CD8-positive, alpha-beta memory T cell (primary cell): ENCODE measurements at regions of chr10 and their contacts with region 1.

Region 1: GRCh38 chr10:62637249-62638061 is 167.1 kb upstream of the ADO start:
- DNase-seq: peak; percentile 39 to 78 (median 76)
- H3K4me3 ChIP-seq: peak overlapping the region; percentile 55
- H3K4me3 Mint-ChIP-seq: no peak overlapping the region
- H3K27ac ChIP-seq: peak overlapping the region; percentile 70
- H3K27ac Mint-ChIP-seq: no peak overlapping the region
- H3K4me1 ChIP-seq: peaks cover 32% of the 10 kb centered on the region
- H3K4me1 Mint-ChIP-seq: peaks cover 8 to 24% (median 10%) of the 10 kb centered on the region in 3 donors
- H3K27me3 ChIP-seq: no peaks in the 10 kb centered on the region
- H3K27me3 Mint-ChIP-seq: no peaks in the 10 kb centered on the region

Region 2: DNA sequence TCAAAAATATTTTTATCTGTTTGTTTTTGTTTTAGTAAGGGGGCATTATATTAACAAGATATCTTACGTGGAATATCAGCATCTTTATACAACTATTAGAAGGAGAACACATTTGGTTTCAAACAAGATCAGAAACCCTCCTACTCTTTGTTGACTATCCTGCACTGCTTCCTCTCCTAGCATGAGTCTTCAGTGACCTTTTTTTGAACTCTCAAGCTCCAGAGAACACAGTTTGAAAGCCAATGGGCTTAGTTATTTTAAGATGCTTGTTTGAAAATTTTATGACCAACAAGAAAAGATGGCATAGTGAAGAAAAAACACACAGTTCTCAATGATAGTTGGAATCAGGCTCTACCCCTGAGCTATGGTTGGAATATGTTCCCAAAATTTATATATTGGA is 331.6 kb before region 1 on chr10:
- CTCF ChIA-PET with region 1: no interaction called
- POLR2A ChIA-PET with region 1: interaction called, 23 read pairs
- DNase-seq: no peak
- H3K4me3 ChIP-seq: no peak overlapping the region
- H3K4me3 Mint-ChIP-seq: no peak overlapping the region
- H3K27ac ChIP-seq: no peak overlapping the region
- H3K27ac Mint-ChIP-seq: peak overlapping the region in 1 of 8 donors; percentile 46
- H3K4me1 ChIP-seq: peaks cover 17% of the 10 kb centered on the region
- H3K4me1 Mint-ChIP-seq: peaks cover 7 to 27% (median 9%) of the 10 kb centered on the region in 3 donors
- H3K27me3 ChIP-seq: no peaks in the 10 kb centered on the region
- H3K27me3 Mint-ChIP-seq: peaks cover 7 to 24% of the 10 kb centered on the region in 2 donors

Region 3: GRCh38 chr10:62661143-62661542 is 23.7 kb after region 1 on chr10:
- CTCF ChIA-PET with region 1: no interaction called
- POLR2A ChIA-PET with region 1: no interaction called
- DNase-seq: no peak
- H3K4me3 ChIP-seq: no peak overlapping the region
- H3K4me3 Mint-ChIP-seq: no peak overlapping the region
- H3K27ac ChIP-seq: no peak overlapping the region
- H3K27ac Mint-ChIP-seq: peak overlapping the region in 1 of 8 donors; percentile 2
- H3K4me1 ChIP-seq: no peaks in the 10 kb centered on the region
- H3K4me1 Mint-ChIP-seq: peaks cover 6 to 12% (median 9%) of the 10 kb centered on the region in 3 donors
- H3K27me3 ChIP-seq: no peaks in the 10 kb centered on the region
- H3K27me3 Mint-ChIP-seq: peaks cover 0 to 2% of the 10 kb centered on the region in 2 donors

Region 4: GRCh38 chr10:62681211-62681940 is 43.9 kb after region 1 on chr10:
- CTCF ChIA-PET with region 1: interaction called, 11 read pairs
- POLR2A ChIA-PET with region 1: no interaction called
- DNase-seq: peak; percentile 39 to 86 (median 64)
- H3K4me3 ChIP-seq: no peak overlapping the region
- H3K4me3 Mint-ChIP-seq: peak overlapping the region in 6 of 7 donors; percentile 2 to 76 (median 44)
- H3K27ac ChIP-seq: no peak overlapping the region
- H3K27ac Mint-ChIP-seq: peak overlapping the region in 7 of 8 donors; percentile 27 to 92 (median 84)
- H3K4me1 ChIP-seq: peaks cover 16% of the 10 kb centered on the region
- H3K4me1 Mint-ChIP-seq: peaks cover 20 to 40% (median 30%) of the 10 kb centered on the region in 3 donors
- H3K27me3 ChIP-seq: no peaks in the 10 kb centered on the region
- H3K27me3 Mint-ChIP-seq: no peaks in the 10 kb centered on the region

Region 5: GRCh38 chr10:62804356-62805230 is 167.1 kb after region 1 on chr10 and contains the start of gene ADO:
- CTCF ChIA-PET with region 1: interaction called, 12 read pairs
- POLR2A ChIA-PET with region 1: interaction called, 5 read pairs
- DNase-seq: peak; percentile 66 to 84 (median 79)
- H3K4me3 ChIP-seq: peak within 1 kb of the TSS; percentile 84
- H3K4me3 Mint-ChIP-seq: peak within 1 kb of the TSS; percentile 89 to 97 (median 97)
- H3K27ac ChIP-seq: peak within 1 kb of the TSS; percentile 88
- H3K27ac Mint-ChIP-seq: peak within 1 kb of the TSS; percentile 94 to 99 (median 98)
- H3K4me1 ChIP-seq: peaks cover 32% of the 10 kb centered on the region
- H3K4me1 Mint-ChIP-seq: peaks cover 38 to 44% (median 42%) of the 10 kb centered on the region in 3 donors
- H3K27me3 ChIP-seq: no peaks in the 10 kb centered on the region
- H3K27me3 Mint-ChIP-seq: peaks cover 0 to 4% of the 10 kb centered on the region in 2 donors
- total RNA-seq, gene ADO: 38.4 to 39.4 TPM